ENCODE measurements at regions of chr11 and their contacts with region 1.

Region 1: DNA sequence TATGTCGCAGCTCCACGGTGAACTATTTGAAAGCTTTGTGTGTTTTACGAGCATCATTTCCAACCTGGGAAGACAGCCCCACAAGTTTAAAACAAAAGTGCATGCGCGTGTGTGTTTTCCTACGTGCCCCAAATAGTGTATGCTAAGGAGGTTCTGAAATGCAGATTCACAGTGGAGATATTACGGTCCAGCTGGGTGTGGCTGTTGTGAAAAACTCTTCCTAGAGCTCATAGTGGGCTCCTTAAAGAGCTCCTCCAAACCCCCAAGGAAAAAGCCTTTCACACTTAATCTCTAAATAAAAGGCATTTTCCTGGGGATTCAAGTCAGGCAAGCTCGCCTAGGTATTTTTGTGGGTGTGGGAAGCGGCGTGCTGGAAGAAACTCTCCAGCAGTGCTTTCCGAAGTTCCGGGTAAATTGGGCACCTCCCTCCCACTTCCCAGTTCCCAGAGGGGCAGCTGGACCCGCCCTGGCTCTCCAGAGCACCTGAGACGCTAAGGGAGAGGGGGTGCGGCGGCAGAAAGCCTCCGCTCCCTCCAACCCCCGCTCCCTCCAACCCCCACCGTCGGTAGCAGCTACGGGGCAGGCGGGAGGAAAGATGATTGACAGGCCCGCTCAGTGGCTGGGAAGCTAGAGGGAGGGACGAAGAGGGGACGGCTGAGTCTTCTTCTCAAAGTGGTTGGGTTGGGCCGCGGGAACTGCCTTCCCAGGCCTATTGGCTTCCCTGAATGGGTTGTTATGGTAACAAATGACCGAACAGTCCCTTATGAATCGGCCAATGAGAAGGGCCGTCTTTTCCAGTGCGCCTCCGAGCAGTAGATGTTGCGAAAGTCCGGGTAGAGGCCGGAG is 558 bp upstream of the PCF11 start:
- DNase-seq: peak; percentile 100
- ATAC-seq: peak; percentile 92
- H3K4me3 ChIP-seq: peak overlapping the region; percentile 58
- H3K27ac ChIP-seq: peak overlapping the region; percentile 60
- H3K4me1 ChIP-seq: peaks cover 3% of the 10 kb centered on the region
- H3K27me3 ChIP-seq: no peaks in the 10 kb centered on the region
- CTCF ChIP-seq: no peak
- POLR2A ChIP-seq: no peak
- RAD21 ChIP-seq: no peak

Region 2: DNA sequence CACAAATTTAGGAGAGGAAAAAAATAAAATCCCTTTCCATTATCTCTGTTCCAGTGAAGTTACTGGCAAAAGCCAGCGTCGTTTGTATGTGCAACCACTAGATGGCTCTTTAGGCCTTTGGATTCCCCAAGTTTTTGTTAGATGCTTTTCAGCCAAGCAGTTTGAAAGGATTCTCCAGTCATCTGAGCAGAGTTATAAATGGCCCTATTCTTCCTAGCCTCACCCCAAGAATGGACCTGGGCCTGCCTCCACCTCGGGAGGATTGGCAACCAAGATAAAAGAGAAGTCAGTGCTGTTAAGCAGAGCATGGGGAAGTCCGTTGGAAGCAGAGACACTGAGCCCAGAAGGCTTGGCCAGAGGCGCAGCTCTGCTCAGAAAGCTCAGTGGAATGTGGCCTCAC is 438.1 kb before region 1 on chr11:
- CTCF ChIA-PET with region 1: no interaction called
- POLR2A ChIA-PET with region 1: no interaction called
- dilution Hi-C with region 1: no loop called
- in situ Hi-C with region 1: no loop called
- intact Hi-C with region 1: loop called (anchors 5 kb)
- DNase-seq: peak; percentile 49
- ATAC-seq: peak; percentile 93
- H3K4me3 ChIP-seq: no peak overlapping the region
- H3K27ac ChIP-seq: no peak overlapping the region
- H3K4me1 ChIP-seq: no peaks in the 10 kb centered on the region
- H3K27me3 ChIP-seq: peaks cover 9% of the 10 kb centered on the region
- CTCF ChIP-seq: peak; percentile 72
- POLR2A ChIP-seq: no peak
- RAD21 ChIP-seq: peak; percentile 69

Region 3: GRCh38 chr11:82927254-82927880 is 229.0 kb before region 1 on chr11:
- CTCF ChIA-PET with region 1: no interaction called
- POLR2A ChIA-PET with region 1: no interaction called
- dilution Hi-C with region 1: no loop called
- in situ Hi-C with region 1: no loop called
- intact Hi-C with region 1: loop called (anchors 2 kb)
- DNase-seq: peak; percentile 64
- ATAC-seq: peak; percentile 84
- H3K4me3 ChIP-seq: no peak overlapping the region
- H3K27ac ChIP-seq: no peak overlapping the region
- H3K4me1 ChIP-seq: no peaks in the 10 kb centered on the region
- H3K27me3 ChIP-seq: no peaks in the 10 kb centered on the region
- CTCF ChIP-seq: peak; percentile 69
- POLR2A ChIP-seq: no peak
- RAD21 ChIP-seq: peak; percentile 52

Region 4: GRCh38 chr11:82978422-82979099 is 177.8 kb before region 1 on chr11:
- CTCF ChIA-PET with region 1: no interaction called
- POLR2A ChIA-PET with region 1: no interaction called
- dilution Hi-C with region 1: no loop called
- in situ Hi-C with region 1: no loop called
- intact Hi-C with region 1: loop called (anchors 5 kb)
- DNase-seq: peak; percentile 90
- ATAC-seq: peak; percentile 62
- H3K4me3 ChIP-seq: no peak overlapping the region
- H3K27ac ChIP-seq: no peak overlapping the region
- H3K4me1 ChIP-seq: peaks cover 3% of the 10 kb centered on the region
- H3K27me3 ChIP-seq: no peaks in the 10 kb centered on the region
- CTCF ChIP-seq: no peak
- POLR2A ChIP-seq: no peak
- RAD21 ChIP-seq: no peak

Region 5: DNA sequence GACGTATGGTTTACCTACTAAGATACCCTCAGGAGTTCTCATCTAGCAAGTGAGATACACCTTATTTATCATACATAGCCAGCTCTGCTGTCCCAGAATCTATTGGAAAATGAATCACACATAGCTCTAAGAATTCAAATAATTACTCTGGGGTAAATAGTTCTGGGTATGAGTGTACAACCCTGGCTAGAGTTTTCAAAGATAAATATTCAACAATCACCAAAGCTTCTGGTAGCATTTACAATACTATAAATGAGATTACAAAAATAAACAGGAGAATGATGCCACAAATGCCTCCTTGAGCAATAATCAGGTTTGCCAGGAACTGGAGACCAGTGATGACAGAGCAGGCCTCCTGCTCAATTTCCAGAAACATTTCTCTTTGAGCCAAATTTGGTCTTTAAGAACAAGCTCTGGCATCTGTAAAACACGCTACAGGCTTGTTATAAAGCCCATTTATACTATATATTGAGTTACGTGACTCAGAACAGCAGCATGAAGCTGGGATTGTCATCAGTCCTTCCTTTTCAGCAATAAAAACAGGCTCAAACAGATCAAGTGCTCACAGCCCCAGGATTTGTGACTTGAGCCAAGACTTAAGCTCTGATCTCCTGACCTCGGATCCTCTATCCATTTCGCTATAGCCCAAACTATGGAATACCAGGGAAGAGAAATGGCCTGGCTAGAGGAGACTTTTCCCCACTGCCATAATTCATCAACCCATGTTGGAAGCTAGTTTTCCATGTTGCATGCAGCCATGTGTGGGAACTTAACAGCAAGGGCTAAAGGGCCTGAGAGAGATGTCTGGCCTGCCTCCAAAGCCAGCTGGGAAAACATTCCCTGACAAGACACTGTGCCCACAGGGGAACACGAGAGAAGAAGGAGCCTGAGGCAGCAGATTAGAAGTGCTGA is 104.4 kb before region 1 on chr11:
- CTCF ChIA-PET with region 1: no interaction called
- POLR2A ChIA-PET with region 1: no interaction called
- dilution Hi-C with region 1: loop called (anchors 25 kb)
- in situ Hi-C with region 1: no loop called
- intact Hi-C with region 1: loop called (anchors 5 kb)
- DNase-seq: peak; percentile 98
- ATAC-seq: peak; percentile 83
- H3K4me3 ChIP-seq: no peak overlapping the region
- H3K27ac ChIP-seq: peak overlapping the region; percentile 91
- H3K4me1 ChIP-seq: peaks cover 23% of the 10 kb centered on the region
- H3K27me3 ChIP-seq: no peaks in the 10 kb centered on the region
- CTCF ChIP-seq: no peak
- POLR2A ChIP-seq: no peak
- RAD21 ChIP-seq: no peak

Region 6: GRCh38 chr11:83092488-83093384 is 63.6 kb before region 1 on chr11:
- CTCF ChIA-PET with region 1: no interaction called
- POLR2A ChIA-PET with region 1: interaction called, 3 read pairs
- dilution Hi-C with region 1: no loop called
- in situ Hi-C with region 1: no loop called
- intact Hi-C with region 1: loop called (anchors 2 kb)
- DNase-seq: peak; percentile 24
- ATAC-seq: peak; percentile 52
- H3K4me3 ChIP-seq: no peak overlapping the region
- H3K27ac ChIP-seq: no peak overlapping the region
- H3K4me1 ChIP-seq: peaks cover 4% of the 10 kb centered on the region; the same call in 1 of the 2 replicates
- H3K27me3 ChIP-seq: no peaks in the 10 kb centered on the region
- CTCF ChIP-seq: no peak
- POLR2A ChIP-seq: no peak
- RAD21 ChIP-seq: no peak

Region 7: DNA sequence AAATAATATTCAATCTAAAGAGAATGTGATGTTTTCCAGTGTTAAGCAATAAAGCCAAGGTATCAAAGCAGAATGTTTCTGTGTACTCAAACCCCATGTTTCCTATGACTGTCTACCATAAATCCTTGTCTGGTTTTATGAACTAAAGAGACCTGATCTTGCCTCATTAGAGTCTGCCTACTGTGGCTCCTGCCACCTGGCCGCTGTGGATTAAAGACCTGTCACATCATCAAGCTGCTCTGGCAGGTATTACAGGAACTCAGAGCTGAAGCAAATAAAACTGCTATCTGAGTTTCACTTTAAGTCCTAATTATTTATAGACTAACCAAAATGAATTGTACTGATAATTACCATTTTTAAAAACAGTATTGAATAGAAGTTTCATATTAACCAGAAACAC is 337.5 kb after region 1 on chr11:
- CTCF ChIA-PET with region 1: no interaction called
- POLR2A ChIA-PET with region 1: no interaction called
- dilution Hi-C with region 1: no loop called
- in situ Hi-C with region 1: no loop called
- intact Hi-C with region 1: no loop called
- DNase-seq: no peak
- ATAC-seq: no peak
- H3K4me3 ChIP-seq: no peak overlapping the region
- H3K27ac ChIP-seq: no peak overlapping the region
- H3K4me1 ChIP-seq: no peaks in the 10 kb centered on the region
- H3K27me3 ChIP-seq: no peaks in the 10 kb centered on the region
- CTCF ChIP-seq: no peak
- POLR2A ChIP-seq: no peak
- RAD21 ChIP-seq: no peak

Measured in IMR-90 (cell line).